Right ventricle myocardium superior (tissue), 1 donor: ENCODE measurements at regions of chr17 and their contacts with region 1.

Region 1: GRCh38 chr17:44400226-44400847 is 10.9 kb upstream of the ITGA2B start:
- DNase-seq: no peak
- ATAC-seq: no peak

Region 2: DNA sequence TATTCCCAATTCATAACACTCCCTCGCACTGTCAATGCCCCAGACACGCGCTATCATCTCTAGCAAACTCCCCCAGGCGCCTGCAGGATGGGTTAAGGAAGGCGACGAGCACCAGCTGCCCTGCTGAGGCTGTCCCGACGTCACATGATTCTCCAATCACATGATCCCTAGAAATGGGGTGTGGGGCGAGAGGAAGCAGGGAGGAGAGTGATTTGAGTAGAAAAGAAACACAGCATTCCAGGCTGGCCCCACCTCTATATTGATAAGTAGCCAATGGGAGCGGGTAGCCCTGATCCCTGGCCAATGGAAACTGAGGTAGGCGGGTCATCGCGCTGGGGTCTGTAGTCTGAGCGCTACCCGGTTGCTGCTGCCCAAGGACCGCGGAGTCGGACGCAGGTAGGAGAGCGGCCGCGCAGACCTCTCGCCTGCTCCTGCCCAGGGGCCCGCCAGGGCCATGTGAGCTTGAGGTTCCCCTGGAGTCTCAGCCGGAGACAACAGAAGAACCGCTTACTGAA is 55.3 kb before region 1 on chr17 and contains the start of gene GRN:
- intact Hi-C with region 1: no loop called
- DNase-seq: peak; percentile 94
- ATAC-seq: peak; percentile 98
- total RNA-seq, gene GRN: 135 TPM

Region 3: GRCh38 chr17:44503147-44504029 is 103.1 kb after region 1 on chr17 and contains the start of gene GPATCH8:
- intact Hi-C with region 1: loop called (anchors 10 kb)
- DNase-seq: peak; percentile 96
- ATAC-seq: peak; percentile 99
- total RNA-seq, gene GPATCH8: 17.9 TPM

Region 4: GRCh38 chr17:44522883-44523671 is 122.7 kb after region 1 on chr17:
- intact Hi-C with region 1: loop called (anchors 5 kb)
- DNase-seq: peak; percentile 81
- ATAC-seq: peak; percentile 82